Mucosa of descending colon (tissue), 3 donors: ENCODE measurements at regions of chr2 and their contacts with region 1.

Region 1: GRCh38 chr2:85318222-85319074 is 9.3 kb downstream of the TGOLN2 start:
- DNase-seq: no peak
- ATAC-seq: peak; percentile 15
- H3K4me3 ChIP-seq: no peak overlapping the region
- H3K4me1 ChIP-seq: peaks cover 1% of the 10 kb centered on the region
- CTCF ChIP-seq: no peak

Region 2: DNA sequence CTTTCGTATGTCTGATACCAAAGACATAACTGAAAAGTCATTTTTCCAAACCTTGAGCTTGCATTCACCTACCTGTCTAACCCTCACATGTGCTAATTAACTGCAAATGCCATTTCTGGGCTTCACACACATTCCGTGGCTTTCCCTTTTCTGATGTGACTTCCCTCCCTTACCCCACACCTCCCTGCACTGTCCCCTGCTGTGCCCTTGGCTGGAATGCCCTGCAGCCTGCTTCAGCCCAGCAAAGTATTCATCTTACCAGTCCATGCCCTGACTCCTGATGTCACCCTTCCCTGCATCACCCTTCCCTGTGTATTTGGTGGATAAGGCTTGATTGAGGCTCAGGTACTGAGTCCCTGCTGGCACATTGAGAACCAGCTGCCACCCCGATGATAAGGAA is 23.7 kb after region 1 on chr2:
- intact Hi-C with region 1: loop called in 1 of 2 experiments (anchors 2 kb)
- DNase-seq: no peak
- ATAC-seq: no peak
- H3K4me3 ChIP-seq: no peak overlapping the region
- H3K4me1 ChIP-seq: no peaks in the 10 kb centered on the region
- CTCF ChIP-seq: no peak

Region 3: GRCh38 chr2:85468704-85469349 is 150.4 kb after region 1 on chr2:
- intact Hi-C with region 1: no loop called
- DNase-seq: peak; percentile 75 to 93 (median 80)
- ATAC-seq: peak; percentile 91
- H3K4me3 ChIP-seq: no peak overlapping the region
- H3K4me1 ChIP-seq: peaks cover 37% of the 10 kb centered on the region
- CTCF ChIP-seq: no peak

Region 4: GRCh38 chr2:85595301-85596025 is 277.0 kb after region 1 on chr2 and contains the start of gene RNF181:
- intact Hi-C with region 1: no loop called
- DNase-seq: peak; percentile 93 to 96 (median 96)
- ATAC-seq: peak; percentile 97
- H3K4me3 ChIP-seq: peak within 1 kb of the TSS; percentile 92
- H3K4me1 ChIP-seq: peaks cover 16% of the 10 kb centered on the region
- CTCF ChIP-seq: no peak
- total RNA-seq, gene RNF181: 73.7 to 89.5 (median 80.8) TPM

Region 5: GRCh38 chr2:85935746-85936208 is 617.3 kb after region 1 on chr2:
- intact Hi-C with region 1: no loop called
- DNase-seq: no peak
- ATAC-seq: no peak
- H3K4me3 ChIP-seq: no peak overlapping the region
- H3K4me1 ChIP-seq: no peaks in the 10 kb centered on the region
- CTCF ChIP-seq: no peak